AG04449 (cell line): ENCODE measurements at regions of chr1 and their contacts with region 1.

Region 1: GRCh38 chr1:156096640-156097391 is 14.6 kb upstream of the MEX3A start:
- DNase-seq: no peak
- H3K4me3 ChIP-seq: peak overlapping the region; percentile 3; the same call in 1 of the 2 replicates
- CTCF ChIP-seq: peak; percentile 99

Region 2: DNA sequence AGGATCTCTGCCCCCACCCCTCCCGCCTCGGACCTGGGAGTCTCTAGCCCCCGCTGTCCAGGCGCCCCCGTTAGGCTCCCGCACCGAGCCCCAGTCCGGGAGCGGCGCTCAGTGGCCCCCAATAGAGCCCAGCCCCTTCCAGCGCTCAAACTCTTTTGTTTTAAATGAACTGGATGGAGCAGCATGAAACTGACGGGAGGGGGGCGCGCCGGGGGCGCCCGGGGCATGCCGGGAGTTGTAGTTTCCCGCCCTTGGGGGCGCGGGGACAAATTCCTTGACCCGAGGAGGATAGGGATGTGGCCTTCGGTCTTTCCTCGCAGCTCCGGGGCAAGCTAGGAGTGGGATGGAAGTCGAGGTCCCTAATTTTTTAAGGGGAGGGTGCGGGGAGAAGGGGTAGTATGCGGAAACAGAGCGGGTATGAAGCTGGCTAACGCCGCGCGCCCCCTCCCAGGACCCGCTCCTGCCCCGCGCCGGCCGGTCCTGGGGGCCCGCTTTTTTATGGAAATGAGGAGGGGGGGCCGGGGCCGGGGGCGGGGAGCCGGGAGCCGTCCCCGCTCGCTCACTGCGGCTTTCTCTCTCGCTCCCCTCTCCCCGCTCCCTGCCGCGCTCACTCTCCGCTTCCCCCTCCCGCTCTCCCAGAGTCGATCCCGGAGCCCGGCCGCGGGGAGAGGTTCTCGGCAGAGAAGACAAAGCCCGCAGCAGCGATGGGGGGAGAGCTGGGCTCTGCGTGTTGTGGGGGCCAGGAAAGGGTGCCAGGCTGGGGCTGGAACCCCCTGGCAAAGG is 14.3 kb before region 1 on chr1 and contains the start of gene MEX3A:
- CTCF ChIA-PET with region 1: interaction called, 63 read pairs
- POLR2A ChIA-PET with region 1: interaction called, 3 read pairs
- DNase-seq: no peak
- H3K4me3 ChIP-seq: peak within 1 kb of the TSS; percentile 80
- CTCF ChIP-seq: no peak

Region 3: DNA sequence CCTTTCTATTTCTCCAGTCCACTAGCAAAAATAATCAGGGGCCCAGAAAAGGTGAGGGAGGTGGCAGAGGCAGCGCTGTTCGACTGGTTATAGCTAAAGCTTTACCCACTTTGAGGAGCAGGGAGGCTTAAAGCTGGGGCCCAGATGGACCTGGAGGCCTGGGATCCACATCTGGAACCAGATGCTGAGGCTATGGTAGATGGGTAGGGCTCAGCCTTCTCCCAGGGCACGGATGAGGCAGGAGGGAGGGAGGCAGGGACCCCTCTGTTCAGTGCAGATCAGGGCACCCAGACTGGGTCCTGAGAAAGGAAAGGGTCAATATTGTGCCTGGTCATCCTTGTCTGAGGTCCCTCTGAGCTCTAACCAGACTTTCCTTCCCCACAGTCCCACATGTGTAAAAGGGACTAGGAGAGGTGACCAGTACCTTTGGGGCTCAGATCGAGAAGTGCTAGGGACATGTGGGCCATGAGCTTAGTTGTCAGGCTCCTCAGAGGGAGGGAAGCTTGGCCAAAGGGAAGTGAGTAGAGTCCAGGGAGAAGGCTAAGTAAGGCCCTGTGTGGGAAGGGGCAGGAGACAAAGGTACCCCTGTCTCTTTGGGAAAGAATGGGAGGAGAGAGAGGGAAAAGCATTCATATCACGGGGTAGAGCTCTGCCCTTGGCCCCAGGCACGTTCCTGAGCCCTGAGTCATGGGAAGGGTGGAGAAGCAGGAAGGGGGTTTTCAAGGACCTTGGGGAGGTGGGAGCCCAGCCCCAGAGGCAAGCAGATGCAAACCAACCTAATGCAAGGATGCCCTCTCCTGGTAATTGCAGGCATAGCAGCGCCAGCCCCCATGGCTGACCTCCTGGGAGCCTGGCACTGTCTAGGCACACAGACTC is 33.1 kb after region 1 on chr1:
- CTCF ChIA-PET with region 1: interaction called, 1,837 read pairs
- POLR2A ChIA-PET with region 1: interaction called, 62 read pairs
- DNase-seq: peak; percentile 80
- H3K4me3 ChIP-seq: peak overlapping the region; percentile 26
- CTCF ChIP-seq: peak; percentile 96

Region 4: GRCh38 chr1:156276966-156277381 is 180.2 kb after region 1 on chr1:
- CTCF ChIA-PET with region 1: interaction called, 11 read pairs
- POLR2A ChIA-PET with region 1: no interaction called
- DNase-seq: no peak
- H3K4me3 ChIP-seq: no peak overlapping the region
- CTCF ChIP-seq: no peak